ENCODE measurements at regions of chr1 and their contacts with region 1.

Region 1: DNA sequence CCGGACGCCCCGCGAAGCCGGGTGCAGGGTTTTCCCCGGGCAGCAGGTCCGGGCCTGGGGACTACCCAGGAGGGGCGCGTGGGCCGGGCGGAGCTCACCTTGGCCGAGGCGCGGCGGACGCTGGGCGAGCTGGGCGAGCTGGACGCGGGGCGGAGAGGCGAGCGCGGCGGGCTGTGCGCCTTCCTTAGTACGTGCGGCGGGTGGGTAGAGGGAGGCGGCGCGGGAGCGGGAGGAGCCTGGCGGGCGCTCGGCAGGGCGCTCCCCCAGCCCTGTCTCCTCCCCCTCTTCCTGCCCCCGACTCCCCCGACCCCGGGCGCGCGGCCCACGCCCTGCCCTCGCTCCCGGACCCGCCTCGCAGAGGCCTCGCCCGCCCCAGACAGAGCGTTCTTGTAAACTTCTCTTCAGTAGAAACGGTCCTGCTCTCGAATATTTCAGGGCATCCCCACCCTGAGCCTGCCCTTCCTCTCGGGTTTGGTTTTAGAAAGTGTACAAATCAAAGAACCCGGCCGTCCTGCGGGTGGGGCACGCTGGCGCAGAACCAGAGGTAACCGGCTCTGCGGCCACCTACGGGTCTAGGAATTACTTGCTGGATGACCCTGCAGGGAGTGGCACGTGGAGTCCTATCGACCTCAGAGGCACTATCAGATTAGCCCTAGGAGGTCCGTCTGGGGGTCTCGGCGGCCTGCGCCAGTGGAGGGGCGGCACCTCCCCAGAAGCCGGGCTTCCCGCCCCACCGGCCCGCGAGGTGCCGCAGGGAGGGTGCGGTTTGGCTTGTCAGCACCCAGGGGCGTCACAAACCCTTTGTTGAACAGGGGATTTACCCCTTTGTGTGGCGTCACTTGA is at the start of gene S100A10:
- DNase-seq: peak; percentile 65 to 78 (median 76)
- H3K4me3 ChIP-seq: peak within 1 kb of the TSS; percentile 89 to 95 (median 94)
- H3K4me3 Mint-ChIP-seq: peak within 1 kb of the TSS; percentile 98
- H3K27ac ChIP-seq: peak within 1 kb of the TSS; percentile 95 to 100
- H3K27ac Mint-ChIP-seq: peak within 1 kb of the TSS; percentile 99 to 100 (median 99)
- H3K4me1 ChIP-seq: peaks cover 42 to 46% of the 10 kb centered on the region in 2 donors
- H3K4me1 Mint-ChIP-seq: peaks cover 49% of the 10 kb centered on the region
- H3K27me3 ChIP-seq: no peaks in the 10 kb centered on the region
- H3K27me3 Mint-ChIP-seq: peaks cover 0 to 5% (median 5%) of the 10 kb centered on the region in 3 donors
- CTCF ChIP-seq: no peak
- polyA plus RNA-seq, gene S100A10: 422 to 2,138 (median 2,129) TPM

Region 2: GRCh38 chr1:151611832-151612500 is 381.9 kb before region 1 on chr1 and contains the start of gene SNX27:
- intact Hi-C with region 1: loop called in 1 of 2 experiments (anchors 10 kb)
- DNase-seq: peak; percentile 91 to 92 (median 92)
- H3K4me3 ChIP-seq: peak within 1 kb of the TSS; percentile 64 to 90 (median 89)
- H3K4me3 Mint-ChIP-seq: peak within 1 kb of the TSS; percentile 94 to 97
- H3K27ac ChIP-seq: peak within 1 kb of the TSS; percentile 95
- H3K27ac Mint-ChIP-seq: peak within 1 kb of the TSS; percentile 97 to 100 (median 99)
- H3K4me1 ChIP-seq: peaks cover 52 to 67% of the 10 kb centered on the region in 2 donors
- H3K4me1 Mint-ChIP-seq: peaks cover 61% of the 10 kb centered on the region
- H3K27me3 ChIP-seq: no peaks in the 10 kb centered on the region
- H3K27me3 Mint-ChIP-seq: peaks cover 0 to 3% (median 0%) of the 10 kb centered on the region in 3 donors
- CTCF ChIP-seq: no peak
- polyA plus RNA-seq, gene SNX27: 40.1 to 57.1 (median 47.6) TPM

Region 3: DNA sequence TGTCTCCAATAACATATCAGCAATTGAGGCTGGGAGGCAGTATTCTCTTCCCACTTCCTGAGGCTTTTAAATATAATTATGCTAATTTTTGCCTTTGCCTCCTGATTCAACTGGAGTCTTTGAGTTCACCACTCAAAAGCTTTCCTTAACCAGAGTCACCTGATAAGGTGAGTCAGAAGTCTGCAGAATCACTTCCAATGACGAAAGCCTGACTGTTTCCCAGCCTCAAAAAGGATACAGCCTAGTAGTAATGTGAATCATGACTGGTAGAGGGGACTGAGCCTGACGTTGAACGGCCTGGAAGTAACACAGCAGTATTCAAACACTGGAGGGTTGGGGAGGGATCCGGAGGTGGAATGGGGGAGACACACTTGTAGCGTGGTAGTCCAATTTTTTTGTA is 220.2 kb before region 1 on chr1:
- intact Hi-C with region 1: no loop called
- DNase-seq: no peak
- H3K4me3 ChIP-seq: no peak overlapping the region
- H3K4me3 Mint-ChIP-seq: no peak overlapping the region
- H3K27ac ChIP-seq: no peak overlapping the region
- H3K27ac Mint-ChIP-seq: no peak overlapping the region
- H3K4me1 ChIP-seq: no peaks in the 10 kb centered on the region
- H3K4me1 Mint-ChIP-seq: no peaks in the 10 kb centered on the region
- H3K27me3 ChIP-seq: no peaks in the 10 kb centered on the region
- H3K27me3 Mint-ChIP-seq: peaks cover 2 to 4% (median 3%) of the 10 kb centered on the region in 3 donors
- CTCF ChIP-seq: no peak

Region 4: DNA sequence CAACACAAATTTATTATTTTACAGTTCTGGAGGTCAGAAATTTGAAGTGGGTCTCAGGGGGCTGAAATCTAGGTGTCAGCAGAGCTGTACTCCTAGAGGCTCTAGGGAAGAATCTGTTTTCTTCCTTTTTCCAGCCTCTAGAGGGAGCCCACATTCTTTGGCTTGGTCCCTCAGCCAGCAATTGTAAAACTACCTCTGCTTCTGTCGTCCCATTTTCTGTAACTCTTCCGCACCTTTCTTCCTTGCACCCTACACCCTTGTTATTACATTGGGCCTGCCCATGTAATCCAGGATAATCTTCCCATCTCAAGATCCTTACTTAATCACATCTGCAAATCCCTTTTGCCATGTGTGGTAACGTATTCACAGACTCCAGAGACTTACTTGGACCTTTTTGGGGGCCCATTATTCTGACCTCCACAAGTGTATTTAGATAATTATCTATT is 59.8 kb before region 1 on chr1:
- intact Hi-C with region 1: loop called (anchors 2 kb)
- DNase-seq: peak; percentile 62 to 81 (median 72)
- H3K4me3 ChIP-seq: no peak overlapping the region
- H3K4me3 Mint-ChIP-seq: no peak overlapping the region
- H3K27ac ChIP-seq: no peak overlapping the region
- H3K27ac Mint-ChIP-seq: peak overlapping the region in 1 of 7 donors; percentile 82
- H3K4me1 ChIP-seq: peaks cover 3 to 8% of the 10 kb centered on the region in 2 donors
- H3K4me1 Mint-ChIP-seq: peaks cover 14% of the 10 kb centered on the region
- H3K27me3 ChIP-seq: no peaks in the 10 kb centered on the region
- H3K27me3 Mint-ChIP-seq: peaks cover 0 to 3% (median 0%) of the 10 kb centered on the region in 3 donors
- CTCF ChIP-seq: peak; percentile 94

Region 5: GRCh38 chr1:151939779-151940178 is 54.1 kb before region 1 on chr1:
- intact Hi-C with region 1: loop called (anchors 2 kb)
- DNase-seq: peak; percentile 58 to 76 (median 59)
- H3K4me3 ChIP-seq: no peak overlapping the region
- H3K4me3 Mint-ChIP-seq: no peak overlapping the region
- H3K27ac ChIP-seq: peak overlapping the region; percentile 34 to 85
- H3K27ac Mint-ChIP-seq: peak overlapping the region; percentile 88 to 100 (median 99)
- H3K4me1 ChIP-seq: peaks cover 32 to 47% of the 10 kb centered on the region in 2 donors
- H3K4me1 Mint-ChIP-seq: peaks cover 49% of the 10 kb centered on the region
- H3K27me3 ChIP-seq: no peaks in the 10 kb centered on the region
- H3K27me3 Mint-ChIP-seq: peaks cover 0 to 15% (median 0%) of the 10 kb centered on the region in 3 donors
- CTCF ChIP-seq: no peak

Region 6: DNA sequence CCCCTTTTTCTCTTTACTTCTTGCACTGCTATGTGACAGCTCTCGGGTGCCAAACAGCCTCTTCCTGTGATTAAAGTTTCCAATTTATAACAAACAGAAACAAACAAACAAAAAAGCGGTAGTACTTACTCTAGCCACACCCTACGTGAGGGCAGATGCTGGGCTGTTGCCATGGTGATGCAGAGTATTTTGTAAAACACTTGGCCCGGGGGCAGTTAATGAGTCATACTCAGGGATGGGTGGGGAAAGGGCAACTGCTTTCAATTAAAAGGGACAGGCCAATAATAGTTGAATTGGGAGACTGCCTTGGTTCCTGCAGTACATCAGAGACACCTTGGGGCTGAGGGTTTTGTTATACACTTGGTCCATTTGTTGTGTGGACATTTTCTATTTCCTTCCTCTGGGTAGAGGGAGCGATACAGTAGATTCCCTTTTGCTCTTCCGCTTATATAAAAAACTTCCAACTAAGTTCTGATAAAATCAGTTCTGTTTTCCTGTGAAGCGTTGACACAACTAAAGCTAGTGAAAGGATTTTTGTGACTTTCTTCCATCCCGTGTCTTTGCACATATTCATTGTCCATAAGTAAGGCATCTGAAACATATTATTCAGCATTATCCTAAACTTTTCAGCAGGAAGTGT is 48.0 kb before region 1 on chr1:
- intact Hi-C with region 1: loop called (anchors 2 kb)
- DNase-seq: peak; percentile 99 to 100 (median 99)
- H3K4me3 ChIP-seq: peak overlapping the region in 1 of 3 experiments; percentile 46
- H3K4me3 Mint-ChIP-seq: peak overlapping the region; percentile 40 to 77
- H3K27ac ChIP-seq: peak overlapping the region; percentile 80 to 100
- H3K27ac Mint-ChIP-seq: peak overlapping the region; percentile 97 to 100 (median 99)
- H3K4me1 ChIP-seq: peaks cover 46 to 55% of the 10 kb centered on the region in 2 donors
- H3K4me1 Mint-ChIP-seq: peaks cover 54% of the 10 kb centered on the region
- H3K27me3 ChIP-seq: no peaks in the 10 kb centered on the region
- H3K27me3 Mint-ChIP-seq: peaks cover 0 to 8% (median 2%) of the 10 kb centered on the region in 3 donors
- CTCF ChIP-seq: no peak

Region 7: DNA sequence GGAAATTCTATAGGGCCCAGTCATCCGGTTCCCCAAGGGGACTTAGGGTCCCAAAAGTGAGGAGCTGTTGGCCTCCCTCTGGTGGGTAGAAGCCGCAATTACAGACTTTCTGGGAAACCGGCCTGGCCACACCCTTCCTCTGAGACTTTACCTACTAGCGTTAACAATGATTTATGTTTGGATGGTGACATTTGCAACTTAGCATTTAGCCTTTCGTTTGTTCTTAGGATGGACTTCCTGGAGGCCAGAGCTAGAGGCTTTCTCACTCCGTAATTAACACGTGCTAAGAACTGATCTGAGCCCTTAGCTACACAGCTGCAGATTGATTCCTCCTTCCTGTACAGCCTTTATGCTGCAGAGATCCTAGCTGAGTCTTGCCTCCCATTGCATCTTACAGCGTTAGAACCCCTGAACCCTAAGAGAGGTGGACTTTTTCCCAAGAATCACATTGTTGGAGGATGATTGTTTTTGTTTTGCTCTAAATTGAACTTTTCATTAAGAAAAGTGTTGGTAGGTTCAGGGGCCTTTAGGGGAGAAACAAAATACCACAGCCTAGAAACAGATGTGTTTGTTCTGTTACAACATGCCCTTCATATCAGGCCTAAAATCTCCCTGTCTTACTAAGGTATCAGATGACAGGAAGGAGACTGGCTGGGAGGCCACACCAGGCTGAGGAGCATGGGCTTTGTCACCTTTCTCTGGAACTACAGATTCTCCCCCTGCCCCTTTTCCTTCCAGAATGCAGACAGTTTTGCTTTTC is 41.0 kb after region 1 on chr1:
- intact Hi-C with region 1: loop called (anchors 5 kb)
- DNase-seq: peak; percentile 68 to 80 (median 79)
- H3K4me3 ChIP-seq: peak overlapping the region; percentile 95 to 100 (median 100)
- H3K4me3 Mint-ChIP-seq: peak overlapping the region; percentile 95 to 98
- H3K27ac ChIP-seq: peak overlapping the region; percentile 98 to 99
- H3K27ac Mint-ChIP-seq: no peak overlapping the region
- H3K4me1 ChIP-seq: peaks cover 83 to 87% of the 10 kb centered on the region in 2 donors
- H3K4me1 Mint-ChIP-seq: peaks cover 44% of the 10 kb centered on the region
- H3K27me3 ChIP-seq: no peaks in the 10 kb centered on the region
- H3K27me3 Mint-ChIP-seq: peaks cover 0 to 4% (median 2%) of the 10 kb centered on the region in 3 donors
- CTCF ChIP-seq: peak; percentile 91

Region 8: DNA sequence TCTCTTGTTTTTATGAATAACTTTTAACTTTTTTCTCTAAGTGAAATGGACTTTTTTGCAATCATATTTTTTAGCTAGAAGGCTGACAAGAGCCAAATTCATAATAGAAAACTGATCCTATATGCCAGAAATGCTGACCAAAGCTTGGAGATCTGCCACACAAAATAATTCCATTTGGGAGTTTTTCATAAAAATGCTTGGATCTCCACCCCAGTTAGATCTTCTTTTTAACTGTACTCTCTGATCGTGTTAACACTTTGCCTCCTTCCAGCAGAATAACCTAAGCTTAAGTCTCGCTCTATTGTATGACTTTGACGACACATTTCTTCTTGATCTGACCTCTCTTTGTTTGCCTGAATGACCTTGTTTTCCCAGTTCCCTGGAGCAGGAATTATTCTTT is 349.1 kb after region 1 on chr1:
- intact Hi-C with region 1: no loop called
- DNase-seq: no peak
- H3K4me3 ChIP-seq: no peak overlapping the region
- H3K4me3 Mint-ChIP-seq: no peak overlapping the region
- H3K27ac ChIP-seq: no peak overlapping the region
- H3K27ac Mint-ChIP-seq: no peak overlapping the region
- H3K4me1 ChIP-seq: no peaks in the 10 kb centered on the region
- H3K4me1 Mint-ChIP-seq: no peaks in the 10 kb centered on the region
- H3K27me3 ChIP-seq: peaks cover 0 to 18% of the 10 kb centered on the region in 2 donors
- H3K27me3 Mint-ChIP-seq: peaks cover 1 to 14% (median 7%) of the 10 kb centered on the region in 3 donors
- CTCF ChIP-seq: no peak

Measured in CD14-positive monocyte (primary cell).